ENCODE measurements at regions of chr12 and their contacts with region 1.

Region 1: GRCh38 chr12:112179916-112180315 is 54.6 kb downstream of the TRAFD1 start:
- DNase-seq: no peak
- H3K4me3 ChIP-seq: no peak overlapping the region
- H3K27ac ChIP-seq: no peak overlapping the region
- H3K4me1 ChIP-seq: no peaks in the 10 kb centered on the region
- H3K27me3 ChIP-seq: no peaks in the 10 kb centered on the region
- CTCF ChIP-seq: no peak

Region 2: GRCh38 chr12:111887926-111888745 is 291.8 kb before region 1 on chr12:
- CTCF ChIA-PET with region 1: no interaction called
- dilution Hi-C with region 1: no loop called
- in situ Hi-C with region 1: no loop called
- intact Hi-C with region 1: no loop called
- DNase-seq: no peak
- H3K4me3 ChIP-seq: no peak overlapping the region
- H3K27ac ChIP-seq: no peak overlapping the region
- H3K4me1 ChIP-seq: no peaks in the 10 kb centered on the region
- H3K27me3 ChIP-seq: no peaks in the 10 kb centered on the region
- CTCF ChIP-seq: no peak

Region 3: DNA sequence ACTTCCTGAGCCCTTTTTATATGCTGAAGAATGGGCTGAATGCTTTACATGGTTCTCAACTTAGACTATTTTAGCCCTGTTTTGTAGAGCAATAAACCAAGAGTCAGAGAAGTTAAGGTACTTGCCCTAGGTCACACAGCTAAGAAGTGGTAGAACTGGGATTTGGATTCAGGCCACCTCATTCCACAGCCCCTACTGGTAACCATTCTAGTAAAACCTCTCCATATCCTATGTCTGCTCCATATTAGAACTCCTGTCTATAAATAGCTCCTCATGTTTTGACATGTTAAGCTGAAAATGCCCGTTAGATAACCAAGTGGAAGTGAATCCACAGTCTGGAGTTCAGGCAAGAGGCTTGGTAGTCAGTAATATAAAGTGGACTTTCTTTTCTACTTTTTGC is 90.8 kb after region 1 on chr12:
- CTCF ChIA-PET with region 1: no interaction called
- dilution Hi-C with region 1: loop called (anchors 5 kb)
- in situ Hi-C with region 1: no loop called
- intact Hi-C with region 1: no loop called
- DNase-seq: peak; percentile 16
- H3K4me3 ChIP-seq: no peak overlapping the region
- H3K27ac ChIP-seq: no peak overlapping the region
- H3K4me1 ChIP-seq: peaks cover 9% of the 10 kb centered on the region
- H3K27me3 ChIP-seq: no peaks in the 10 kb centered on the region
- CTCF ChIP-seq: no peak

Region 4: GRCh38 chr12:112303004-112303403 is 123.1 kb after region 1 on chr12:
- CTCF ChIA-PET with region 1: no interaction called
- dilution Hi-C with region 1: no loop called
- in situ Hi-C with region 1: no loop called
- intact Hi-C with region 1: no loop called
- DNase-seq: peak; percentile 62
- H3K4me3 ChIP-seq: no peak overlapping the region
- H3K27ac ChIP-seq: peak overlapping the region; percentile 6
- H3K4me1 ChIP-seq: no peaks in the 10 kb centered on the region
- H3K27me3 ChIP-seq: no peaks in the 10 kb centered on the region
- CTCF ChIP-seq: no peak

Measured in mammary epithelial cell (primary cell).